ENCODE measurements at regions of chr11 and their contacts with region 1.

Region 1: GRCh38 chr11:5380740-5381342 is 2.8 kb upstream of the OR51M1 start:
- DNase-seq: peak; percentile 40
- CTCF ChIP-seq: peak; percentile 63

Region 2: GRCh38 chr11:4636962-4637661 is 743.7 kb before region 1 on chr11 and contains the start of gene OR51D1:
- in situ Hi-C with region 1: loop called (anchors 25 kb)
- DNase-seq: peak; percentile 68
- CTCF ChIP-seq: peak; percentile 94

Region 3: DNA sequence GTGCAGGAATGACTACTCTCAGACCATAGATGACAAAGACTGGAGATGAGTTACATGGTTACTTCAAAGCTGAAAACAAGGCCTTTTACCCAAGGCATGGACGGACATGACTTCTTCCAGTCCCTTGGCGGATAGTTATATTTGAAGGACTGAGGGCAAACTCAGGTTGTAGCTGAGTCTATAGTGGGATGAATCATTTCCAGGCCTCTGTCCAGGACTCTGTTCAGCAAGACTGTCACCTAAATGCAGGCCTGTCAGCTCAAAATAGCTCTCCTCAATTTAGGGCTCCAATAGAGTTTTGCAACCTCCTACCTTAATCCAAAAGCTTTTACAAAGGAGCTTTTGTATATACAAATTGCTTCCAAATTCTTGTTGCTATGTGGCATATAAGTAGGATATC is 358.8 kb before region 1 on chr11:
- in situ Hi-C with region 1: no loop called
- DNase-seq: no peak
- CTCF ChIP-seq: no peak

Region 4: DNA sequence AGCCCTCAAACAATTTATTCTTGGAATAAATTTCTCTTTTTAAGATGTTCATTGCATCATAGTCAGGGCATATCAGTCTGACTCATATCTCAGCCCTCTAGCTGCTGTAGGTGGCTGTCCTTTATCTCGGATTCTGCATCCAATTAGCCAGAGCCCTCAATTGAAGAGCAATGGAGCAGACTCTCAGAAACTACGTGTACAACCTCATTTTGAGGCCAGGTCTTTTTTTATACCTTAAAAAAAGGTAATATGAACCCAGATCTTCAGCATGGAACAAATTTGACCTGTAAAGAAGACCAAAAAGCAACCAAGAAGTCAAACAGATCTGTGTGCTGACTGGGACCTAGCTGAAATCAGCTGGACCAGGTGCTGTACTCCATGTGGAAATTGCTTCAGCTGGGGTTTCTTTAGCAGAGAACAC is 251.4 kb before region 1 on chr11:
- in situ Hi-C with region 1: loop called (anchors 25 kb)
- DNase-seq: no peak
- CTCF ChIP-seq: no peak

Region 5: DNA sequence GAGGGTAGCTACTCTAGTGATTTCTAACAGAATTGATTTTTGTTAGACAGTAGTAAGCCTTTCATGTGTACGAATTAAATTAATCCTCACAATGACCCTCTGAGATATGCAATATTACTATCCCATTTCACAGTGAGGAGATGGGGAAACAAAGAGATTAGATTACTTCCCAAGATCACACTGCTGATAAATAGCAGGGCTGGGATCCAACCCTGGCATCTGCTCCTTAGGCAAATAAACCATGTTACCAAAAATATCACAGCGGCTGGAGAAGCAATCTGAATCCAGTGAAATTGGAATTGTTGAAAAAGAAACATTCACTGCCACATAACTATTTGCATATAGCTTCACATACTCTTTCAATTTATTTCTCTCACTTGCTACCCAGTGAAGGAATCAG is 952.3 kb after region 1 on chr11:
- in situ Hi-C with region 1: no loop called
- DNase-seq: no peak
- CTCF ChIP-seq: no peak